Endothelial cell of umbilical vein (primary cell): ENCODE measurements at regions of chr13 and their contacts with region 1.

Region 1: GRCh38 chr13:43522788-43523187 is 264.0 kb downstream of the ENOX1 start:
- DNase-seq: no peak
- H3K4me3 ChIP-seq: no peak overlapping the region
- H3K27ac ChIP-seq: no peak overlapping the region
- H3K4me1 ChIP-seq: no peaks in the 10 kb centered on the region
- H3K27me3 ChIP-seq: no peaks in the 10 kb centered on the region
- CTCF ChIP-seq: no peak
- POLR2A ChIP-seq: no peak

Region 2: DNA sequence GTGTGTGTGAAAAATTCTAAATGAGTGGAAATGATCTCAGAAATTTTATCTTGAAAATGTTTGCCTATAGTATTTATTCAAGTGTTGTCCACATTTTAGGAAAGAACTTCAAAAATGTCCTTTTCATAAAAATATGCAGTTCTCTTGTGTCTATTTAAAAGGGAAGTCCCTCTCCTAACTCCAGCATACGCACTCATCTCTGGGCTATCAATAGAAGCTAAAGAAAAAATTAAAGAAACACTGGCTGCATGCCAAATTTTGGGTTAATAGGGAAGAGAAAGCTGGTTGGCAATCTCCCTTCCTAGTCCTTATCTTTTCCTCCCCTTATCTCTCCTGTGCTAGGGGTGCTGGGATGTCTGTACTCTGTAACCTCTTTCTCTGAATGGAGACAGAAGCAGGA is 49.4 kb before region 1 on chr13:
- CTCF ChIA-PET with region 1: no interaction called
- POLR2A ChIA-PET with region 1: no interaction called
- dilution Hi-C with region 1: no loop called
- intact Hi-C with region 1: no loop called
- DNase-seq: peak; percentile 40
- H3K4me3 ChIP-seq: no peak overlapping the region
- H3K27ac ChIP-seq: no peak overlapping the region
- H3K4me1 ChIP-seq: peaks cover 2% of the 10 kb centered on the region
- H3K27me3 ChIP-seq: no peaks in the 10 kb centered on the region
- CTCF ChIP-seq: no peak
- POLR2A ChIP-seq: no peak

Region 3: DNA sequence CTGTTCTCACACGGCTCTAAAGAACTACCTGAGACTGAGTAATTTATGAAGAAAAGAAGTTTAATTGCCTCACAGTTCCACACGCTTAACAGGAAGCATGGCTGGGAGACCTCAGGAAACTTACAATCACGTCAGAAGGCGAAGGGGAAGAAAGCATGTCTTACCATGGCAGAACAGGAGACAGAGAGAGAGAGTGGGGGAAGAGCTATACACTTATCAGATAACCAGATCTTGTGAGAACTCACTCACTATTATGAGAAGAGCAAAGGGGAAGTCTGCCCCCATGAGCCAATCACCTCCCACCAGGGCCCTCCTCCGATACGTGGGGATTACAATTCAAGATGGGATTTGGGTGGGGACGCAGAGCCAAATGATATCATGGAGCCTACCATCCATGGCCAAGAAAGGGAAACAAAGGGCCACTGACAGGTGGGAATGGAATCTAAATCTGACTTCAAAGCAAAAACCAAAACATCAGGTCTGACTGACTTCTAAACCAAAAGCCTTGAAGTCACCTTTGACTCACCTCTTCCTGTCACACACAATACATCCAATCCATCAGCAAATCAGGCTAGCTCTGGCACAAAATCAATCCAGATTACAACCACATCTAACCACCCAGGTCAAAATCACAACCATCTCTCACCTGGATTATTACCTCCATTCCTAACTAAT is 74.3 kb after region 1 on chr13:
- CTCF ChIA-PET with region 1: no interaction called
- POLR2A ChIA-PET with region 1: no interaction called
- dilution Hi-C with region 1: no loop called
- intact Hi-C with region 1: loop called (anchors 2 kb)
- DNase-seq: no peak
- H3K4me3 ChIP-seq: no peak overlapping the region
- H3K27ac ChIP-seq: no peak overlapping the region
- H3K4me1 ChIP-seq: no peaks in the 10 kb centered on the region
- H3K27me3 ChIP-seq: no peaks in the 10 kb centered on the region
- CTCF ChIP-seq: no peak
- POLR2A ChIP-seq: no peak